Gastrocnemius medialis (tissue), 4 donors: ENCODE measurements at regions of chr1 and their contacts with region 1.

Region 1: GRCh38 chr1:151494741-151495281 is 16.4 kb upstream of the CGN start:
- DNase-seq: no peak
- ATAC-seq: no peak
- H3K4me3 ChIP-seq: no peak overlapping the region
- H3K27ac ChIP-seq: no peak overlapping the region
- H3K4me1 ChIP-seq: no peaks in the 10 kb centered on the region
- H3K27me3 ChIP-seq: no peaks in the 10 kb centered on the region
- CTCF ChIP-seq: no peak
- POLR2A ChIP-seq: no peak

Region 2: DNA sequence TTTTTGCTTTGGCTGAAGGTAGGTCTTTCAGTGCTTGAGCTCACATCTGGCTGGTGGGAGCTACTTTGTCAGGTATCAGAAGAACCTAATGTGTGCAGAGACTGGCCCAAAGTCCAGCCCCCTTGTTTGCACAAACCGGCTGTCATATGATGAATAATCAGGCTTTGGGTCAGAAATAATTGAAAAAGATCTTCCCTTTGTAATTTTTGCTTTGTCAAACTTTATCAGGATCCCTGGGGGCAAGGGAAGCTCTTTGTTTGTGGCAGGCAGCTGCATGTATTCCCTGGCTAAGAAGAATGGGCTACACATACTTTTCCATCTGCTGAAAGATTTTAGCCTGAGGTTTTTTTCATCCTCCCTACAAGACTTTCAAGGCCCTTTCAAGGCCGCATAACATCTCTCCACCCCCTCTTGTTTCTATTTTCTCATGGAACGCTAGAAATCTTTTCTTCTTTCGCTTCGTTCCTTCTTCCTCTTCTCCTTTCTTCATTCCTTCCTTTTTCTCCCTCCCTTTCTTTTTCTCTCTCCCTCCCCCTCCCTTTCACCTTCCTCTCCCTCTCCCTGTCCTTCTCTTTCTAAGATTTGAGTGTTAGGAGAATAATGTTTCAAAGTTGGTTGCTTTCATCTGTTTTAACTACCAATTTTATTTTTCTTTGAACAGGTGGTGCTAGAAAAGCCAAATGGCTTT is 70.8 kb after region 1 on chr1:
- in situ Hi-C with region 1: no loop called
- intact Hi-C with region 1: loop called (anchors 2 kb)
- DNase-seq: no peak
- ATAC-seq: no peak
- H3K4me3 ChIP-seq: no peak overlapping the region
- H3K27ac ChIP-seq: no peak overlapping the region
- H3K4me1 ChIP-seq: no peaks in the 10 kb centered on the region
- H3K27me3 ChIP-seq: no peaks in the 10 kb centered on the region
- CTCF ChIP-seq: no peak
- POLR2A ChIP-seq: no peak

Region 3: DNA sequence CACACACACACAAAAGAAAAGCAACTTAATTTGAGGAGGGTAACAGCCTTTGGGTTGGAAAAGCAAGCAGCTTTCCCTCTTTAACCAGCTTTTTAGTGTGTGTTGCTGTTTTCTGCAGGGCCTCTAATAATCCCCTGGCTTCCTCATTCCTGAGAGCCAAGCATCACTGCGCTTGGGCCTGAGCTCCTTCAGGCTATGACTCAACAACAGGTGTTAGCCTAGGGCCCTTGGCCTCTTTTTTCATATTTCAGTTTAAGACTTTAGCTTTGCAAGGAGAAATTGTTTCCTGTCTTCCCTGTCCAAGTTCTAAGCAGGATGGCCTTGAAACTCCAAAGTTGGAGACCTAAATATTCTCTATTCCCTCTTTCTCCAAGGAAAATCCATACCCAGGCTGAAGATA is 90.8 kb after region 1 on chr1:
- in situ Hi-C with region 1: no loop called
- intact Hi-C with region 1: no loop called
- DNase-seq: no peak
- ATAC-seq: peak; percentile 46 to 53
- H3K4me3 ChIP-seq: no peak overlapping the region
- H3K27ac ChIP-seq: no peak overlapping the region
- H3K4me1 ChIP-seq: no peaks in the 10 kb centered on the region
- H3K27me3 ChIP-seq: no peaks in the 10 kb centered on the region
- CTCF ChIP-seq: no peak
- POLR2A ChIP-seq: no peak